Naive thymus-derived CD4-positive, alpha-beta T cell (primary cell): ENCODE measurements at regions of chr2 and their contacts with region 1.

Region 1: DNA sequence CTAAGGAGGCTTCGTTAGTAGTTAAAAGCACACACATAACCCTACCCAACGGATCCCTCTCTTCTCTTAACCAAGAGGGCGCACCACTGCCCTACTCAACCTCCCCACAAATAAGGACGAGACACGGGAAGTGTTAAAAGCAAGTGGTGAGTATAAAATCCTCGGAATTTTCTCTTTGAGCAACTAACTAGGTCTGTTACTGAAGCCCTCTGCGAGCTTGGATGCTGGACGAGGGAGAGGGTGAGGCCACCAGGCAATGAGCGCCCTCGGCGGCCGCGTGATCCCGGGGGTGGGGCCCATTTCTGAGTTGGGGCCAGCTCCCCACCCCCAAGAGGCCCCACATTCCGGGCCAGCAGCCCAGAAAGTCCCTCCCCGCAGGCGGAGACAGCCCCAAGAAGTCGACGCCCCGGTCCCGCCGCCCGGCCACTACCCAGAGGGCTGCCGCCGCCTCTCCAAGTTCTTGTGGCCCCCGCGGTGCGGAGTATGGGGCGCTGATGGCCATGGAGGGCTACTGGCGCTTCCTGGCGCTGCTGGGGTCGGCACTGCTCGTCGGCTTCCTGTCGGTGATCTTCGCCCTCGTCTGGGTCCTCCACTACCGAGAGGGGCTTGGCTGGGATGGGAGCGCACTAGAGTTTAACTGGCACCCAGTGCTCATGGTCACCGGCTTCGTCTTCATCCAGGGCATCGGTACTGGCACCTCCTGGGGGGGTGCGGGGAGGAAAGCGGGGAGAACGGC is at the start of gene CYBRD1:
- DNase-seq: peak in 1 of 9 donors; percentile 48
- ATAC-seq: peak; percentile 43
- H3K4me3 ChIP-seq: no peak within 1 kb of the TSS
- H3K4me3 Mint-ChIP-seq: peak within 1 kb of the TSS; percentile 48 to 90 (median 74)
- H3K27ac ChIP-seq: no peak within 1 kb of the TSS
- H3K27ac Mint-ChIP-seq: no peak within 1 kb of the TSS
- H3K4me1 ChIP-seq: no peaks in the 10 kb centered on the region
- H3K4me1 Mint-ChIP-seq: peaks cover 0 to 25% (median 12%) of the 10 kb centered on the region in 7 donors
- H3K27me3 ChIP-seq: no peaks in the 10 kb centered on the region
- H3K27me3 Mint-ChIP-seq: peaks cover 49 to 62% (median 55%) of the 10 kb centered on the region in 5 donors
- total RNA-seq, gene CYBRD1: 0.46 to 11.1 (median 1.8) TPM

Region 2: DNA sequence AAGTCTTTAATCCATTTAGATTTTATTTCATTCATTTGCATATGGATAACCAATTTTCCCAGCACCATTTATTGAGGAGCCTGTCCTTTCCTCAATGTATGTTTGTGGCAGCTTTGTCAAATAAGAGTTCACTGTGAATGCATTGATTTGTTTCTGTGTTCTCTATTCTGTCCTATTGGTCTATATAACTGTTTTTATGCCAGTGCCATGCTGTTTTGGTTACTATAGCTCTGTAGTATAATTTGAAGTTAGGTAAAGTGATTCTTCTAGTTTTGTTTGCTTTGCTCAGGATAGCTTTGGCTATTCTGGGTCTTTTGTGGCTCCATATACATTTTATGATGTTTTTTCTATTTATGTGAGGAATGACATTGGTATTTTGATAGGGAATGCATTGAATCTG is 1336.9 kb before region 1 on chr2:
- CTCF ChIA-PET with region 1: interaction called, 12 read pairs
- POLR2A ChIA-PET with region 1: no interaction called
- intact Hi-C with region 1: no loop called
- DNase-seq: no peak
- ATAC-seq: no peak
- H3K4me3 ChIP-seq: no peak overlapping the region
- H3K4me3 Mint-ChIP-seq: no peak overlapping the region
- H3K27ac ChIP-seq: no peak overlapping the region
- H3K27ac Mint-ChIP-seq: no peak overlapping the region
- H3K4me1 ChIP-seq: no peaks in the 10 kb centered on the region
- H3K4me1 Mint-ChIP-seq: no peaks in the 10 kb centered on the region
- H3K27me3 ChIP-seq: no peaks in the 10 kb centered on the region
- H3K27me3 Mint-ChIP-seq: peaks cover 6 to 31% (median 13%) of the 10 kb centered on the region in 5 donors

Region 3: GRCh38 chr2:171509945-171510731 is 12.1 kb before region 1 on chr2:
- CTCF ChIA-PET with region 1: interaction called, 10 read pairs
- POLR2A ChIA-PET with region 1: no interaction called
- intact Hi-C with region 1: no loop called
- DNase-seq: no peak
- ATAC-seq: no peak
- H3K4me3 ChIP-seq: no peak overlapping the region
- H3K4me3 Mint-ChIP-seq: peak overlapping the region in 1 of 10 donors; percentile 25
- H3K27ac ChIP-seq: no peak overlapping the region
- H3K27ac Mint-ChIP-seq: no peak overlapping the region
- H3K4me1 ChIP-seq: no peaks in the 10 kb centered on the region
- H3K4me1 Mint-ChIP-seq: peaks cover 0 to 7% (median 0%) of the 10 kb centered on the region in 7 donors
- H3K27me3 ChIP-seq: no peaks in the 10 kb centered on the region
- H3K27me3 Mint-ChIP-seq: peaks cover 0 to 12% (median 0%) of the 10 kb centered on the region in 5 donors